Common myeloid progenitor, CD34-positive (primary cell): ENCODE measurements at regions of chr9 and their contacts with region 1.

Region 1: GRCh38 chr9:90102292-90102901 is 497.6 kb downstream of the GADD45G start:
- DNase-seq: peak; percentile 90 to 94 (median 93)
- H3K4me3 ChIP-seq: no peak overlapping the region
- H3K27ac ChIP-seq: no peak overlapping the region
- H3K4me1 ChIP-seq: peaks cover 0 to 2% (median 0%) of the 10 kb centered on the region in 4 experiments
- H3K27me3 ChIP-seq: peaks cover 0 to 1% (median 0%) of the 10 kb centered on the region in 5 experiments

Region 2: DNA sequence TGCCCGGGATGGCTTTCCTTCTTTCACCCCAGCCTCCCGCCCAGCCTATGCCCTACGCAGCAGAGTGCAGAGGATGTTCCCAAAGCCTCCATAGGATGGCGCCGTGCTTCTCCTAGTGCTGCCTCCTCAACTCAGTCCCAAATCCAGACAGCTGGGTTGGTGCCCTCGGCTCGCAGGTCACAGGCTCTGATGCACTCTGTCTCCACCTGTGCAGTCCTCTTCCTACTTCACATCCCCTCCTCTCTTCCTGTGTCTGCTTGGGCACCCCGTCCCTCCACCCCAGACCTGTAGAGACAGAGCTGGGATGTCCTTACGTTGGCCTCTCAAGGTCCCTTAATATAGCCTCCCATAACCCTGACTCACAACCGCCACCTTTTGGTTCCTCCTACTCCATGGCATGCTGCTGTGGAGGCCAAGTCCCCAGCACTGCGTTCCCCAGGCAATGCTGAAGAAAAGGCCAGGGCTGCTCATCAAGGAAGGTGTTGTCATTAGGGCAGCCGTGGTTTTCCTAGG is 183.2 kb before region 1 on chr9:
- CTCF ChIA-PET with region 1: interaction called, 24 read pairs
- POLR2A ChIA-PET with region 1: no interaction called
- DNase-seq: peak; percentile 68 to 83 (median 80)
- H3K4me3 ChIP-seq: no peak overlapping the region
- H3K27ac ChIP-seq: no peak overlapping the region
- H3K4me1 ChIP-seq: peaks cover 0 to 5% (median 0%) of the 10 kb centered on the region in 4 experiments
- H3K27me3 ChIP-seq: peaks cover 0 to 3% (median 0%) of the 10 kb centered on the region in 5 experiments

Region 3: GRCh38 chr9:90025816-90026215 is 76.6 kb before region 1 on chr9:
- CTCF ChIA-PET with region 1: no interaction called
- POLR2A ChIA-PET with region 1: no interaction called
- DNase-seq: peak in 1 of 3 donors; percentile 9
- H3K4me3 ChIP-seq: no peak overlapping the region
- H3K27ac ChIP-seq: no peak overlapping the region
- H3K4me1 ChIP-seq: peaks cover 0 to 6% (median 1%) of the 10 kb centered on the region in 4 experiments
- H3K27me3 ChIP-seq: no peaks in the 10 kb centered on the region

Region 4: DNA sequence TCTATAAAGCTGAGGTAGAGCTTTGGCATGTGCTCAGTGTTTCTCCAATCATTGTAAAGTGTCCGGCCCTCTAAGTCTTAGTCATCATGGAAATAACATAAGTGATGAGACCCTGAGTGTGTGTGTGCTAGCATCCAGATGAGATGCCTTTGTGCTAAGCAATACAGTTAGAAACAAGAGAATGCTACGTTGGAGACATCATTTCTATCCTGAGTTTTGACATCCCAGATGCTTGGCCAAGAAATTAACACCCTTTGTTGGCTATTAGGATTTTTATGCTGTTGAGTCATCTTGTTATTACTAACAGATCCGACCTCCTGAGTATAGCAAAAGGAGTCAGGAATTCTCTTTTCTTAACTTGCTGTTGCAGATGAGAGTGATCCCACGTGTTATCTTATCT is 10.4 kb after region 1 on chr9:
- CTCF ChIA-PET with region 1: interaction called, 19 read pairs
- POLR2A ChIA-PET with region 1: no interaction called
- DNase-seq: no peak
- H3K4me3 ChIP-seq: no peak overlapping the region
- H3K27ac ChIP-seq: no peak overlapping the region
- H3K4me1 ChIP-seq: no peaks in the 10 kb centered on the region
- H3K27me3 ChIP-seq: no peaks in the 10 kb centered on the region

Region 5: DNA sequence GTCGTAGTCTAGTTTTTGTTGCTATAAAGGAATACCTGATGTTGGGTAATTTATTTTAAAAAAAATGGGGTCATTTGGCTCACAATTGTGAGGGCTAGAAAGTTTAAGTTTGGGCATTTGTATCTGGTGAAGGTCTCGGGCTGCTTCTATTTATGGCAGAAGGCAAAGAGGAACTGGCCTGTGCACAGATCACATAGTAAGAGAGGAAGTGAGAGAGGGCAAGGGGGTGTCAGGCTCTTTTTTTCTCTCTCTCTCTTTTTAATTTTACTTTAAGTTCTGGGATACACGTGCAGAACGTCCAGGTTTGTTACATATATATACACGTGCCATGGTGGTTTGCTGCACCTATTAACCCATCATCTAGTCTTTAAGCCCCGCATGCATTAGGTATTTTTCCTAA is 86.9 kb after region 1 on chr9:
- CTCF ChIA-PET with region 1: no interaction called
- POLR2A ChIA-PET with region 1: no interaction called
- DNase-seq: peak; percentile 30 to 84 (median 76)
- H3K4me3 ChIP-seq: peak overlapping the region in 2 of 7 experiments; percentile 6 to 35
- H3K27ac ChIP-seq: no peak overlapping the region
- H3K4me1 ChIP-seq: peaks cover 0 to 8% (median 6%) of the 10 kb centered on the region in 4 experiments
- H3K27me3 ChIP-seq: no peaks in the 10 kb centered on the region